ENCODE measurements at regions of chr5 and their contacts with region 1.

Region 1: DNA sequence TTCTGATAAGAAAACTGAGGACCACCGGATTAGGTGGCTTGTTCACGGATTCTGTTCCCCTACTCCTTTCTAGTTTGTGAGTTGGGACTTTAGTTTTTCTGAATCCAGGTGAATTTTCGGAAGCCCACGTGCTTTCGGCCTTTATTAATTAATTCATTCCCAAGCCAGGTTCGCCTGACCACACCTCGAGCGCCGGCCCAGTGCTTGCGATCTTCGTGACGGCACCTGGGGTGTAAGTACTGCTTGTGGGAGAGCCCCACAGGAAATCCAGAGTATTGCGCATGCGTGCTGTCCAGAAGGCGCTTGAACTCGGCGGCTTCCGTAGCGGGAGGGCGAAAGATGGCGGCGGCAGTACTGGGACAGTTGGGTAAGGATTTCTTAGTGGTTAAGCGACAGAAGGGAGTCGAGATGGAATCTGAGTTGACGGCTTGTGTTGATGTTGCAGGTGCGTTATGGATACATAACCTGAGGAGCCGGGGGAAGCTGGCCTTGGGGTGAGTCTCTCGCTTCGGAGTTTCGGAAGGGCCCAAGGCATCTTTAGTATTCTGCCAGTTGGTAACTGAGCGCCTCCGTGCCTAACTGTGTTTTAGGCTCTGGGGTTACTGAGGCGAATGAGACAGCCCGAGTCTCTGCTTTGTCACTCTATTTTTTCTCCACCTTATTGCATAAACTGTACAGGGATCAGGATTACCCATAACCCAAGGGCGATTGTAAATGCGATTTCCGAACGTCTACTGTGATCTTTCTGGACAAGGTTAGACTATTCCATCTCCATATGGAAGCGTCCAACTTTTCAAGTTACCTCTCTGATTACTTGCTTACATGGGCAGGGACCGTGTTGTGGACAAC is at the start of gene MRPL22:
- DNase-seq: peak; percentile 99
- H3K4me3 Mint-ChIP-seq: peak within 1 kb of the TSS; percentile 98
- H3K27ac Mint-ChIP-seq: peak within 1 kb of the TSS; percentile 94
- H3K4me1 Mint-ChIP-seq: peaks cover 24% of the 10 kb centered on the region
- H3K27me3 Mint-ChIP-seq: no peaks in the 10 kb centered on the region
- total RNA-seq, gene MRPL22: 83.8 and 89.6 TPM in 2 replicates

Region 2: DNA sequence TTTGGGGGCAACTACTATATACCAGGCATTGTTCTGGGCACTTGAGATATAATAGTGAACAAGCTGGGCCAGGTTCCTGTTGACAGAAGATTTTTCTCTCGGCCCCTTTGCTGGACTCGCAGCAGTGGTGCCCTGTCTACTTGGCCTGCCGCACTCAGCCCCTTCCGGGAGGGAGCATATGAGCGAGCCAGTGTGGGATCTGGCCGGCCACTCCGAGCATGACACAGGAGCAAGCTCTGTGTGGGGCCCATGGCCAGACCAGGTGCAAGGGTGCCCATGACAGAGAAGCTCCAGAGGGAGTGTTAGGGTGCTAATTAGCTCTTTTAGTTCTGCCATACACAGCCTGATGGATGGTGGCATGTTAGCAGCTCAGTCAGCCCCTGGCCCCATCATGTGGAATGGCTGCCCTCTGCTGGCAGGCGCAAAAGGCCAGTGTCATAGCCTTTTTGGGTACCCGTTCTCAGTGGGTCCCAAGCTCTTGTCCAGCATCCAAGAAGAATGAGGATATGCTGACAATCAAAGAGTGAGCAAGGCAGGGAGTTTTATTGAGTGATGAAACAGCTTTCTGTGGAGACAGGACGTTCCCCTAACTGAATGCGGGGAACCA is 63.2 kb after region 1 on chr5:
- intact Hi-C with region 1: loop called (anchors 2 kb)
- DNase-seq: peak; percentile 71
- H3K4me3 Mint-ChIP-seq: no peak overlapping the region
- H3K27ac Mint-ChIP-seq: no peak overlapping the region
- H3K4me1 Mint-ChIP-seq: no peaks in the 10 kb centered on the region
- H3K27me3 Mint-ChIP-seq: peaks cover 5% of the 10 kb centered on the region